ENCODE measurements at regions of chr15 and their contacts with region 1.

Region 1: DNA sequence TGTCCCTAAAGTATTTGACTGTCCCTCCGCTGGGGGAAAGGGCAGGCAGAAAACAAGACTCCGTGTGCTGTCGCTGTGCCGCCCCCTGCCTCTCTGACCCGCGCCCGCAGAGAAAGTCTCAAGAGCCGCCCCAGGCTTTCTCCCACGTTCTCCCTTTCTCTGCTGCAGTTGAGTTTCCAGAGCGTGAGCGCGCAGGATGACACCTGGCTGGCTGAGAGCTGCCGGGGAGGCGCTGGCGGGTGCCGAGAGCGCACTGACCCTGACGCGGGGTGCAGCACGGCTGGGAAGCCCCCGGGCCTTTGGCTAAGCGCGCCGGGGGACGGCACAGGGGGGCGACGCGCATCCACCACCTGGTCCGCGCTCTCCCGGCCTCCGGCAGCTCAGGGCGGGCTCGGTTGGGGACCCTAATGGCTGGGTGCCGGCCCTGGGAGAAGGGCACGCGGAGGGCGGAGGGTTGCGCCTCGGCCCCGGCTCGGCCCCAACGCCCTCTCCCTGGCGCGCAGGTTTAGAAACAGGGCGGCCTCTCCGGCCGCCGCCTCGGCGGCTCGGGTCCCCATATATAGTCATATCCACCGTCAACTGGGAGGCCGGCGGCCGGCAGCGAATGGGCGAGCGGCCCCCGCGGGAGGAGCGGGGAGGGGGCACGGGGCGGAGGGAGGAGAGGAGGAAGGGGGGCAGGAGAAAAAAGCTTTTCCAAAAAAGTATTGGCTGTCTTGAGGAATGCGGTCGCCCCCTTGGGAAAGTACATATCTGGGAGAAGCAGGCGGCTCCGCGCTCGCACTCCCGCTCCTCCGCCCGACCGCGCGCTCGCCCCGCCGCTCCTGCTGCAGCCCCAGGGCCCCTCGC is at the start of gene TPM1:
- DNase-seq: peak; percentile 93
- total RNA-seq, gene TPM1: 14,297 TPM

Region 2: GRCh38 chr15:62782039-62782791 is 260.0 kb before region 1 on chr15:
- intact Hi-C with region 1: loop called (anchors 2 kb)
- DNase-seq: peak; percentile 80

Region 3: DNA sequence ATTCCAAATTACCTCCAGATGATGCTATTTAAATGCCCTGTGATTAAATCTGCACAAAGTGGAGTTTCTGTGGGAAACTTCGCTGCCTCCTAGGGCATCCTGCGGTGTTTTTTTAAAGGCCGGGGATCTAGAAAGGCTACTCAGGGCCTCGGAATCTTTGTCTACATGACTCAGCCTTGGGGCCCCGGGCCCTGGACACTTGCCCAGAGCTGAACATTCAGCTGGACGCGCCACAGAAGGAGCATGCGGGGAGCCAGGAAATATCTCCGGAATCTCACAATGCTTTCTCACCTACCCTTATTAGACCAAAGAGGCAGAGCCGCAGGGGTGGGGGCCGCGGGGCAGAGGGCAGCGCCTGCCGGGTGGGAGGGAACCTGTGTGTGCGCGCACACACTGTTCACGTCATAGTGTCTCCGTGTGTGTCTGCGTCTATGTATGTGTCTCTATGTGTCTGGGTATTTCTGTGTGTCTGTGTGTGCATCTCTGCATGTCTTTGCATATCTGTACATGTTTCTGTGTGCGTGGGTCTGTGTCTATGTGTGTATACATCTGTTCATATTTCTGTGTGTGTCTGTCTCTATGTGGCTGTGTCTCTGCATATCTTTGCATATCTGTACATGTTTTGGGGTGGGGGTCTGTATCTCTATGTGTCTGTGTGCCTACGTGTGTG is 145.1 kb before region 1 on chr15:
- intact Hi-C with region 1: loop called (anchors 2 kb)
- DNase-seq: peak; percentile 96

Region 4: DNA sequence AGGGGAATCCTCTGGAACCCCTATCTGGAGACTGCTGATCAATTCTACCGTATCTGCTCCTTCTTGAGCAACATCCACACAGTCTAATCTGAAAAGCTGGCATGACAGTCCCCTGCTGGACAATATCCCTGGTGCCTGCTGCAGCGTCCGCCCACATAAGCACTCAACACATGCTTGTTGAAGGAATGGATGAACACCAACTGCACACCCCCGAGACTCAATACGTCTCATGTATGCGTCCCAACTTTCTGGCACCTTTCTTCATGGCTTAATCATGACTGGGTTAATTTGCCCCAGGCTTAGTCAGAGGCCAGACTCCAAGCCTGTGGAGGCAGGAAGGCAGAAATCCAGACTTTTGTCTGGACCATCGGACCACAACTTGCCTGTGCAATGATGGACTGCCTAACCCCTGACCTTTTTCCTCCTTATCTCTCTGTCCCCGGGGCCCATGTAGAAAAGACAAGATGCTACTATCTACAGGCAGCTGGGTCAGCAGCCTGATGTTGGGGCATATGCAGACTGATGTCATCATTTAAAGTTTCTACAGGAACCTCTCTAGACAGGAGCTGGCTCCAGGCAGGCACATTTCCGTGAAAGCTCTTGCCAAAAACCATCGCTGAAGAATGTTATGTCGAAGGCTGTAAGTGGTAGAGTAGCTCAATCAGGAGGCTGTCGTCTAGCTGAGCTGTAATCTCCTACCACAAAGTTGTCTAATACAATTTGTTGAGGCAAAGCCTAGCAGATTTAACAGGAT is 113.8 kb before region 1 on chr15:
- intact Hi-C with region 1: loop called (anchors 5 kb)
- DNase-seq: no peak

Region 5: GRCh38 chr15:62995047-62995674 is 47.0 kb before region 1 on chr15:
- intact Hi-C with region 1: loop called (anchors 5 kb)
- DNase-seq: no peak

Measured in cardiac septum (tissue), 1 donor.